ENCODE measurements at regions of chr4 and their contacts with region 1.

Region 1: GRCh38 chr4:3074078-3074795 is at the starts of genes HTT and HTT-AS:
- DNase-seq: peak; percentile 97
- CTCF ChIP-seq: no peak

Region 2: DNA sequence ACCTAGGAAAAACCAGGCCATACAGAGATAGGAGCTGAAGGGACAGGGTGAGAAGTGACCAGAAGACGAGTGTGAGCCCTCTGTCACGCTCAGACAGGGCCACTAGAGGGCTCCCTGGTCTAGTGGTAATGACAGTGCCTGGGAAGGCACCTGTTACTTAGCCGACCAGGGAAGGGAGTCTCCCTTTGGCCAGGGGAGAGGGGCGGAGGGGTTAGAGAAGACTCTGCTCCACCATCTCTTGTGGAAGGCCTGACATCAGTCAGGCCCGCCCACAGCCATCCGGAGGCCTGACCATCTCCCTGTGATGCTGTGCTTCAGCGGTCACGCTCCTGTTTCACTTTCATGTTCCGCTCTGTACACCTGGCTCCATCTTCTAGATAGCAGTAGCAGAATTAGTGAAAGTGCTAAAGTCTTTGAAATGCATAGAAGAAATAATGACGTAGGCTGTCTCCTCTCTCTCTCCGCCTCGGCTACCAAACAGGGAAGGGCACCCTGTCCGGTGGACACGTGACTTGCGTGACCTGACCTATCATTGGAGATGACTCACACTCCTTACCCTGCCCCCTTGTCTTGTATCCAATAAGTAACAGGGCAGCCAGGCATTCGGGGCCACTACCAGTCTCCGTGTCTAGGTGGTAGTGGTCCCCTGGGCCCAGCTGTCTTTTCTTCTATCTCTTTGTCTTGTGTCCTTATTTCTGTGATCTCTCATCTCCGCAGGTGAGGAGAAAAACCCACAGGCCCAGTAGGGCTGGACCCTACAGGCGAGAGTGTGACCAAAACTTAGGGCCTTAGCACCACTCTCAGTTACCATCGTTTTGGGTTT is 26.6 kb before region 1 on chr4:
- CTCF ChIA-PET with region 1: interaction called, 10 read pairs
- POLR2A ChIA-PET with region 1: no interaction called
- DNase-seq: peak; percentile 72
- CTCF ChIP-seq: peak; percentile 72

Measured in GM10248 (cell line).